Sciatic nerve (tissue), 2 donors: ENCODE measurements at regions of chr5 and their contacts with region 1.

Region 1: GRCh38 chr5:173974687-173975239 is 14.2 kb upstream of the C5orf47 start:
- DNase-seq: no peak
- ATAC-seq: no peak

Region 2: GRCh38 chr5:173618927-173619519 is 355.7 kb before region 1 on chr5:
- intact Hi-C with region 1: loop called (anchors 2 kb)
- DNase-seq: no peak
- ATAC-seq: no peak

Region 3: DNA sequence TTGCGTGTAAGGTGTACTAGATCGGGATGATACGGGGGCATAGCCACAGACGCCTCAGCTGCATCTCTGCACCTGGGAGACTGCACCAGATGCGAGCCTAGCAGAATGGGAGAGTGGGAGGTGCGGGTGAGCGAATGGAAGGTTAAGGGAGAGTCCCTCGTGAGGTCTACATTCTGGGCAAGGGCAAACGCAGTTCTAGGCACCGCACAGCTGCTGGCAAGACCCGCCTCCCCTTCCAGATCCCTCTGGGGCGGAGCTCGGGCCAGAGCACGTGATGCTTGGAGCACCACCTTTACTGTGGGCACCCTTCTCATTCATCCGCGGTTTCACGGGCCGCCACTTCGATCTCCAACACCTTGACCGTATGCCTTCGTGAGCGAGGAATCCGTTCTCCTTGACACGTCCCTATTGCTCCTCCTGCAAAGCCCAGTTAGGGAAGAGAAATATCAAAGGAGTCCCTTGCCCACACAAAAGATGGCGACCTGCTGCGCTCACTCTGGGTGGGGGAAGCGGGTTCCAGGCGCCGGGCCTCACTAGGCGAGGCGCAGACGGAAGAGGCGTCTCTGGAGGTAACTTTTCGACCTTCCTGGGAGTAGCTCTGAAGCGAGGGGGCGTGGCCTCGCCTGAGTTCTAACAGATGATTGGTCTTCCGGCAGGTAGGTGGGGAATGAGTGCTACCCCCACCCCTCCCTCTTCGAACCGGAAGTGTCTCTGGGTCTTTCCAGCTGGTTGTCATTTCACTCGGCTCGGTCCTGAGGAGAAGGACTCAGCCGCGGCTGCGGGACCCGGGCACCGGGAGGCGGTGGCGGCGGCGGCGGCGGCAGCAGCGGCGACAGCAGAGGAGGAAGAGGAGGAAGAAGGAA is 86.9 kb before region 1 on chr5 and contains the start of gene CPEB4:
- intact Hi-C with region 1: no loop called
- DNase-seq: peak; percentile 99
- ATAC-seq: peak; percentile 99
- total RNA-seq, gene CPEB4: 42.2 TPM